Left cardiac atrium (tissue), 4 donors: ENCODE measurements at regions of chr22 and their contacts with region 1.

Region 1: DNA sequence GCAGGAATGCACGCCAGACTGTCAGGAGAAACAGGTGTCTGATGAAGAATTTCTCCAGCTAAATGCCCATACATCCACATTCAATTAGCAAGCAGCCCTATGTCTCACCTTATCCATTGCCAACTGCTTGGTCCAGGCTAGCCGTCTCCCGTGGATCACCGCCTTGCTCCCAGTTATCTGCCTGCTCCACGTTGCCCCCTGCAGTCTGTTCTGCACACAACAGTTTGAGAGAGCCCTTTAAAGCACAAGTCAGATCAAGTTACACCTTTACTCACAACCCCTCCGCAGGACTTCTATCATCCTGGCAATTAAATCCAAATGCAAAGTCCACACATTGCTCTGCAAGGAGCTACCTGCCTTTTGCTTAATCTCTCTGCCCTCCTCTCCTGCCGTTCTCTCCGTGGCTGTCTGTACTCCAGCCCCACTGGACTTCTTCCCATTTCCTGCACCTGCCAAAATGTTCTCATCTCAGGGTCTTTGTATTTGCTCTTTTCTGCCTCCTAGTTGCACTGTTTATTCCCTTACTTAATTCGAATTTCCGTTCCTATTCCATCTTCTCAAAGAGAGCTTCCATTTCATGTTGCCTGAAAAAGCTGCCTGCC is 185.3 kb upstream of the LARGE1 start:
- DNase-seq: peak; percentile 69
- ATAC-seq: peak; percentile 57 to 91

Region 2: DNA sequence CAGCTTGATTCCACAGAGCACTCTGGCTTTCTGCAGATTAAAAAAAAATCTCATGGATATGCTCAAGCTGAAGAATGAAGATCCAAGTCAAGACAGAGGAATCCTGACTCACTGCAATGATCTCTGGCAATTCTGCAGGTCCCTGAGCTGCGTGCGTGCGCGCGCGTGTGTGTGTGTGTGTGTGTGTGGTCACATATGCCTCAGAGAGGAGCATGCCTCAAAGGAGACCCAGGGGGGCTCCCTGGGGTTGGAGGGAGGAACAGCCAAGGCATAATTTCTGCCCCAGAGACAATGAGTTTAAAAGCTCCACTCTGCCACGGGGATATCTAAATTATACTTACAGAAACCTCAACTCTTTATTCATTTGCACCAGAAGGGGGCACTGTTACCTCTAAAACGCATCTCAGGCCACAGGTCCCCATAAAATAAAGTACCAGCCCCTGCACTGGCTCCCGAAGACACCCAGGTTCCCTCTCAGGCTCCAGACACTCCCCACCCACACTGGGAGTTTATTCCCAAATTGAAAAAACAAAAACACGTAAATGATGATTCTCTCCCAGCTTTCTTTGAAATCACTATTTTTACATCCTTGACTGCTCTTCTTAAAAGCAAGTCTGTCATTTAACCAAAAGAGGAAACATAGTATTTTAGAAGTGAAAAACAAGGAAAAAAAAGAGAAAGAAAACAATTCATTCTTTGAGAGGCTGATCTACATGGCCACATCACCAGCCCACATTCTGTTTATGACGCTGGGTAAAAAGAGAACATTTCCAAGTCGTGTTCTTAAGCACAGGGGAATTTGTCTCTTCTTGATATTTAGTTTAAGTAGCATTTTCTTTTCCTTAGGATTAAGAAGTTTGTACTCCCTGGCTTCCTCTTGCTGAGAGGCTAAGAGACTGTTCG is 586.2 kb before region 1 on chr22:
- intact Hi-C with region 1: loop called in 1 of 2 experiments (anchors 10 kb)
- DNase-seq: peak; percentile 34
- ATAC-seq: peak; percentile 66 to 78

Region 3: GRCh38 chr22:34198976-34199375 is 93.4 kb after region 1 on chr22:
- intact Hi-C with region 1: no loop called
- DNase-seq: no peak
- ATAC-seq: no peak

Region 4: GRCh38 chr22:34390400-34390799 is 284.8 kb after region 1 on chr22:
- intact Hi-C with region 1: no loop called
- DNase-seq: no peak
- ATAC-seq: no peak